ENCODE measurements at regions of chr15 and their contacts with region 1.

Region 1: DNA sequence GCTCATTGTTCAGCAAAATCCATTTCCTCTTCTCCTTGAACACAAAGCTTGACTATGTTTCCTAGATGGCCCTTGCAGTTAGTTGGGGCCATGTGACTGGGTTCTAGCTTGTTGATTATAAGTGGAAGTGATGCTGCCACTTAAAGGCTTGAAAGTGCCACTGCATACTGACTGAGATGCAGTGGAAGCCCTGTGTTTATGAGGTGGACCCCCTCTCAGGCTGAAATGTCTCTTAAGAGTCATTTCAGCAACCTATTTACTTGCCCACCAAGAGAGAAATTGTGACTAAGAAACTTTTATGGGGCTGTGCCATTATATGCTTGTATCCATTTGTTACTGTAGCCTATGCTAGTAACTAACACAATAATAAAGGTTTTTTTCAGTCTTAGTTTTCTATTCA is 8.4 kb upstream of the ANP32A start:
- DNase-seq: peak in 5 of 9 experiments; percentile 21 to 72 (median 31)
- ATAC-seq: peak; percentile 89
- H3K4me3 ChIP-seq: no peak overlapping the region
- H3K4me3 Mint-ChIP-seq: no peak overlapping the region
- H3K27ac ChIP-seq: no peak overlapping the region
- H3K27ac Mint-ChIP-seq: no peak overlapping the region
- H3K4me1 ChIP-seq: peaks cover 6% of the 10 kb centered on the region
- H3K4me1 Mint-ChIP-seq: peaks cover 12% of the 10 kb centered on the region
- H3K27me3 ChIP-seq: no peaks in the 10 kb centered on the region
- H3K27me3 Mint-ChIP-seq: peaks cover 4% of the 10 kb centered on the region
- CTCF ChIP-seq: peak; percentile 63

Region 2: GRCh38 chr15:68298882-68299381 is 530.1 kb before region 1 on chr15:
- CTCF ChIA-PET with region 1: no interaction called
- POLR2A ChIA-PET with region 1: no interaction called
- intact Hi-C with region 1: no loop called
- DNase-seq: peak in 4 of 9 experiments; percentile 12 to 70 (median 46)
- ATAC-seq: peak; percentile 84
- H3K4me3 ChIP-seq: peak overlapping the region; percentile 44 to 49
- H3K4me3 Mint-ChIP-seq: peak overlapping the region; percentile 86
- H3K27ac ChIP-seq: peak overlapping the region; percentile 7 to 72
- H3K27ac Mint-ChIP-seq: peak overlapping the region; percentile 94
- H3K4me1 ChIP-seq: peaks cover 12% of the 10 kb centered on the region
- H3K4me1 Mint-ChIP-seq: peaks cover 37% of the 10 kb centered on the region
- H3K27me3 ChIP-seq: no peaks in the 10 kb centered on the region
- H3K27me3 Mint-ChIP-seq: no peaks in the 10 kb centered on the region
- CTCF ChIP-seq: no peak

Region 3: DNA sequence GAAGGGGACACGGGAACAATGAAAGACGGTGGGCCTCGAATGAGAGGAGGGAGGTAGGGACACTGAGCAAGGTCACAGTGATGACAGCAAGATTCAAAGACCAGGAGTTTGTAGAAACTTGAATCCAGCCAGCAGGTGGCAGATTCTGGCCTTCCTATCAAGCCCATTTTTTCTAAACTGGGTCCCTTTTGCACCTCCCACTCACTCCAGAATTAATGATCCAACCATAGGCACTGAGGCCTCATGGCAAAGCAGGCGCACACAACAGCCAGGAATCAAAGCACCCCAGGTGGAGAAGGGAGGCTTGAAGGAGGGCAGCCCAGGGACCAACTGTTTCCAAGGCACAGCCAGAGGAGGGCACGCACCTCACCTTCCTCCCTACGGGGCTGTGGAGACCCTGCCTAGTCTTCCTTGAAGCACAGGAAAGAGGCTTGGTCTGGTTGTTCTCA is 98.6 kb before region 1 on chr15:
- CTCF ChIA-PET with region 1: interaction called, 5 read pairs
- POLR2A ChIA-PET with region 1: no interaction called
- intact Hi-C with region 1: loop called (anchors 1 to 2 kb)
- DNase-seq: peak in 4 of 9 experiments; percentile 20 to 58 (median 47)
- ATAC-seq: no peak
- H3K4me3 ChIP-seq: no peak overlapping the region
- H3K4me3 Mint-ChIP-seq: no peak overlapping the region
- H3K27ac ChIP-seq: no peak overlapping the region
- H3K27ac Mint-ChIP-seq: no peak overlapping the region
- H3K4me1 ChIP-seq: no peaks in the 10 kb centered on the region
- H3K4me1 Mint-ChIP-seq: peaks cover 3% of the 10 kb centered on the region
- H3K27me3 ChIP-seq: no peaks in the 10 kb centered on the region
- H3K27me3 Mint-ChIP-seq: peaks cover 3% of the 10 kb centered on the region
- CTCF ChIP-seq: peak; percentile 40